ENCODE measurements at regions of chr19 and their contacts with region 1.

Region 1: DNA sequence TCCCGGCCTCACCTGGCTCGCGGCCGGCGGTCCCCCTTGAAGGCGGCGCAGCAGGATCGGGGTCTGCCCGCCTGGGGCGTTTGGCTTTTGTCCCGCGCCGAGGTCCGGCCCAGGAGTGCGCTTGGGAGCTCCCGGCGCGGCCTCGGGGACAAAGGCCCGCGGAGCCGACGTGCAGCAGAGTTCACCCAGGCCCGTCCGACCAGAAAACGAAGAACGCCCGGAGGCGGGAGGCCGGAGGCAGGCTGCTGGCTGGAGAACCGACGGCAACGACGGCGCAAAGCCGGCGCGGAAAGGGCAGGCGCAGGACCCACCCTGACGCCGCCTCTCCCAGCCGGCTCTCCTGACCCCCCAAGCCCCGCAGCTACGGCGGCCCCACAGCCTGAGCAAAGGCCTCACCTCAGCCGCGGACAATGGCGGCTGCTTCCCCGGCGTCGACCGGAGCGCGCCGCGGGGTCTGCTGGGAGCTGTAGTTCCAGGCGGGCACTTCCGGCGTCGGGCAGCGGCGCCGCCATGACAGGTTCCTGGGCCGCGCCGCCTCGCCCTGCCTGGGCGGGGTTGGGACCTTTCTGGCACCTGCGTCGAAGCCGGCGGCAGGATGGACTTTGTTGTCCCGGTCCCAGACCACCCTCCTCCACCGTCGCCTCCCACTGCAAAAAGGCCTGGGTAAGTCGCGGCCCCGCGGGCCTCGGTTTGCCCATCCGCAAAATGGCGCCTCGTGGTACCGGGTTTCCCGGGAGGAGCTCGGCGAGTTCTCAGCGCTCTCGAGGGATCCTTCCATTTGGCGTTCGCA is at the start of gene ZNF606:
- DNase-seq: peak; percentile 87 to 90
- H3K4me3 ChIP-seq: peak within 1 kb of the TSS; percentile 96
- H3K4me3 Mint-ChIP-seq: peak within 1 kb of the TSS; percentile 78
- H3K27ac Mint-ChIP-seq: peak within 1 kb of the TSS; percentile 80
- H3K4me1 ChIP-seq: no peaks in the 10 kb centered on the region
- H3K4me1 Mint-ChIP-seq: peaks cover 7% of the 10 kb centered on the region
- H3K27me3 ChIP-seq: no peaks in the 10 kb centered on the region
- H3K27me3 Mint-ChIP-seq: peaks cover 3% of the 10 kb centered on the region
- CTCF ChIP-seq: no peak
- total RNA-seq, gene ZNF606: 13.0 and 13.9 TPM in 2 replicates

Region 2: DNA sequence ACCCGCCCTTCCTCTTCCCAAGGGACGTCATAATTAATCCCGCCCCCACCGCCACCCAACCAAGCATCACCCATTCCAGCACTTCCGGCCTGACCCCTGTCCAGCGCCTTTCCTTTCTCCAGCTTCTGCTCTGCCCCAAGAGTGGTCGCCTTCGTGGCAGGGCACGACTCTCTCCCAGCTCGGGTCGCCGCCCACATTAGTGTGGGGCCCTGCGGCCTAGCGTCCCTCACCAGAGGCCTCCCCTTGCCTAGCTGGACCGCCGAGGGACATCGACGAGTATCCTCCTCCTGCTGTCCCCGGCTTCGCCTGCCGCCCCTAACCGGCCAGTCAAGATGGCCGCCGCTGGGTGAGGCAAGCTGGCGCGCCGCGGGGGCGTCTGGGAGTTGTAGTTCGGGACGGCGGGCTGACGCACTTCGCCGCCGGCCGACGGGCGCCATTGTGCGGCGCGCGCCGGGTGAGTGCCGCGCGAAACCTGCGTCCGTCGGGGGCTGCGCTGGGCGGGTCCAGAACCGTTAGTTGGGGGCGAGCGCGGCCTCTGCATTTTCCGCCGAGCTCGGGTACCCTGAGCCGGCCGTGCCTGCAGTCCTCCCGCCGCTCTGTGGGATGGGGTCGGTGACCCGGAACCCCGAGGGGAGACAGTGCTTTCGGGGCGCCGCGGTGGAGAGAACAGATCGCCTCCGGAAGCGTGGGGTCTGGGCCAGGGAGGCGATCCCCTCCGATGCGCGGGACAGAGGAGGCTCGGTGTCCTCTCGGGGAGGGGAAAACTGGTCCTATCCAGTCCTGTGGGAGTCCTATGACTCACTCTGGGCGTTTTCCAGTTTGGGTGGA is 180.6 kb after region 1 on chr19 and contains the start of gene ZNF274:
- CTCF ChIA-PET with region 1: no interaction called
- POLR2A ChIA-PET with region 1: no interaction called
- intact Hi-C with region 1: loop called (anchors 2 kb)
- DNase-seq: peak; percentile 96 to 97
- H3K4me3 ChIP-seq: peak within 1 kb of the TSS; percentile 72
- H3K4me3 Mint-ChIP-seq: peak within 1 kb of the TSS; percentile 86
- H3K27ac Mint-ChIP-seq: peak within 1 kb of the TSS; percentile 95
- H3K4me1 ChIP-seq: 0 out of 2 replicates have a peak, but pooled peaks cover 3% of the 10 kb centered on the region
- H3K4me1 Mint-ChIP-seq: no peaks in the 10 kb centered on the region
- H3K27me3 ChIP-seq: no peaks in the 10 kb centered on the region
- H3K27me3 Mint-ChIP-seq: no peaks in the 10 kb centered on the region
- CTCF ChIP-seq: no peak
- total RNA-seq, gene ZNF274: 19.9 and 21.6 TPM in 2 replicates

Measured in Caco-2 (cell line).